Head of caudate nucleus (tissue), 42 donors: ENCODE measurements at regions of chr3 and their contacts with region 1.

Region 1: GRCh38 chr3:14947886-14948555 is 638 bp downstream of the NR2C2 start:
- DNase-seq: peak; percentile 95 to 100 (median 99)

Region 2: GRCh38 chr3:14651440-14652251 is 296.4 kb before region 1 on chr3 and contains the start of gene CCDC174:
- intact Hi-C with region 1: loop called (anchors 10 kb)
- DNase-seq: peak; percentile 85 to 99 (median 96)

Region 3: DNA sequence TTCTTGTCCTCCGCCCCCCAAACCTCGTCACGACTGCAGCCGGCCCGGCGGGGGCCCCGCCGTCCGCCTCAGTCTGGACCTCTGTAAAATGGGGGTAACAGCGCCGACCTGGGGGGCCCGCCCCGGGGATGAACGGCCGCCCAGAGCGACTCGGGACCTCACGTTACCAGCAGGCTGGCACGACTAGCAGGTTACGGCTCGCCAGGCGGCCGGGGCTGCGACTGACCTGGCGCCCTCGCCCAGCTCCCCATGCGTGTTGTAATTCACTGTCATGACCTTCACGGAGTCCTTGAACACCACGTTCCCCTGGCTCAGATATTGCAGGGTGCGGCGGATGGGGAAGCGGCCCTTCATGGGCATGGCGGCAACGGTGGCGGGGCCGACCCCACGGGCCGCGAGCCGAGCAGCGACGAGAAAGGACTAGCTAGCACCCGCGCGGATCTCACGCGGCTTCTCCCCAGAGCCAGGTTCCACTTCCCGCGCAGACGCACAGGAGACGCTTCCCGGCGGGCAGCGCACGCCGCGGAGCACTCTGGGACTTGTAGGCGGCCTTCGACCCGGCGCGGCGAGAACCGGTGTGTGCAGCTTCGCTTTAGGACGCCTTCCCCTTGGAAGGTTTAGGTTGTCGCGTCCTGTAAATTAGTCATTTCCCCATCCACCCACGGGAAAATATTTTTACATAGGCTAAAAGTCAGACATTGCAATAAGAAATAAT is 117.0 kb after region 1 on chr3 and contains the start of gene MRPS25:
- intact Hi-C with region 1: loop called (anchors 10 kb)
- DNase-seq: peak; percentile 71 to 95 (median 90)

Region 4: DNA sequence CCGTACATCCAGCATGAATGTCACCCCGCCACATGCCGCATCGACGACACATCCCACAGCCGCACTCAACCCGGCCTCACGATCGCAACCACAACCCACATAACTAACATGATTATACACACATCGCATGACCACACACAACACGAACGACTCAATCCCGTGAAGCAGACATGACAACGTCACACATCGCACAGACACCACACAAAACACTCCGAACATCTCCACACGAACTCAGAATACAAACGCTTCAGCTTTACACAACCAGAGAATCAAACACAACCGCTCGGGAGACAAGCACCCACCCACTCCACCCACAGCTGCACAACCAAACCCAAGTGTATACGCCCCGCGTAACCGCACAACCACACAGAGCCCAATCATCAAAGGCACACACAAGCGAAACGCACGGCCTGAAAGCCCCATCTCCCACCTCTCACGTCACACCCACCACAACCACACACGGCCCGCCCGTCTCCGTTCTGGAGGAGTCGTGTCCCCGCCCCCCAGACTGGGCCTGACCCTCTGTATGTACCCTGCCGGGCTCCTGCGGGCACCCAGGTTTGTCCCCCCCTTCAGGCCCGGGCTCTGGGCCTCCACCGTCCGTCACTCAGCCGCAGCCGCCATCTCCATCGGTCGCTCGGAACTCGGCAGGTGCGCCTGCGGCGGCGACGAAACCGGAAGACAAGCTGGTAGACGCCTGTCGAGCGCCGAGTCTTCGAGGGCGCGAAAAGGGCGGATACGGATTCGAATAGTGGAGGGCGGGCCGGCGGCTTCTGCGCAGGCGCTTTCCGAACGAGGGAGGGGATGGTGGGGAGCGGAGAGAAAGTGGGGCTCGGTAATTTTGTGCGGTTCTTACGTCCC is 150.7 kb after region 1 on chr3 and contains the start of gene RBSN:
- intact Hi-C with region 1: loop called (anchors 5 kb)
- DNase-seq: peak; percentile 90 to 99 (median 97)